WTC11 (cell line): ENCODE measurements at regions of chr6 and their contacts with region 1.

Region 1: DNA sequence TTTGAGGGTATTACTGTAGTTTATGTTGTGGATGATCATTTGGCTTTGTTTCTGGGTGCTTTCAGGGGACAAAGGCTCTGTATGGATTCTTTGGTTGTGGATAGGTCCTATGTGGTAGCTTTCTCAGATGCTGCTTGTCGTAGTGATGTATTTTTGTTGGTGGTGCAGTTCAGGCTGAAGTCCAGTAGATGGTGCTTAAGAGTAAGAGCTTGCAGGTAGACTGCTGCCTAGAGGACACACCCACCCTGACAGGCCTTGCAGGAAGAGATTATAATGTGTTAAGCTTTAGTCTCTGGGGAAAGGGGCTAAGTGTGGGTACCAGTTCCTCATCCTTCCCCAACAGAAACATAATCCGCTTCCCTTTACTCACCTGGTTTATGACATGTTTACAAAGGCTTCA is 62.6 kb upstream of the ADGRB3 start:
- DNase-seq: peak; percentile 63
- ATAC-seq: peak; percentile 90
- H3K4me3 Mint-ChIP-seq: no peak overlapping the region
- H3K27ac Mint-ChIP-seq: no peak overlapping the region
- H3K4me1 Mint-ChIP-seq: peaks cover 20% of the 10 kb centered on the region
- H3K27me3 Mint-ChIP-seq: no peaks in the 10 kb centered on the region
- CTCF ChIP-seq: peak; percentile 58; the same call in 1 of the 2 replicates

Region 2: GRCh38 chr6:68559070-68559469 is 13.5 kb before region 1 on chr6:
- CTCF ChIA-PET with region 1: interaction called, 16 read pairs
- POLR2A ChIA-PET with region 1: no interaction called
- DNase-seq: no peak
- ATAC-seq: peak; percentile 69
- H3K4me3 Mint-ChIP-seq: peak overlapping the region; percentile 22; the same call in 1 of the 2 replicates
- H3K27ac Mint-ChIP-seq: peak overlapping the region; percentile 91
- H3K4me1 Mint-ChIP-seq: peaks cover 21% of the 10 kb centered on the region
- H3K27me3 Mint-ChIP-seq: no peaks in the 10 kb centered on the region
- CTCF ChIP-seq: no peak

Region 3: GRCh38 chr6:68634726-68635411 is 62.3 kb after region 1 on chr6 and contains the start of gene ADGRB3:
- CTCF ChIA-PET with region 1: interaction called, 38 read pairs
- POLR2A ChIA-PET with region 1: interaction called, 3 read pairs
- DNase-seq: peak; percentile 76
- ATAC-seq: peak; percentile 67
- H3K4me3 Mint-ChIP-seq: peak within 1 kb of the TSS; percentile 93
- H3K27ac Mint-ChIP-seq: peak within 1 kb of the TSS; percentile 80; the same call in 1 of the 2 replicates
- H3K4me1 Mint-ChIP-seq: peaks cover 36% of the 10 kb centered on the region
- H3K27me3 Mint-ChIP-seq: peaks cover 63% of the 10 kb centered on the region
- CTCF ChIP-seq: no peak
- total RNA-seq, gene ADGRB3: 1.0 to 1.9 TPM (median 1.2 TPM) in 3 replicates

Region 4: DNA sequence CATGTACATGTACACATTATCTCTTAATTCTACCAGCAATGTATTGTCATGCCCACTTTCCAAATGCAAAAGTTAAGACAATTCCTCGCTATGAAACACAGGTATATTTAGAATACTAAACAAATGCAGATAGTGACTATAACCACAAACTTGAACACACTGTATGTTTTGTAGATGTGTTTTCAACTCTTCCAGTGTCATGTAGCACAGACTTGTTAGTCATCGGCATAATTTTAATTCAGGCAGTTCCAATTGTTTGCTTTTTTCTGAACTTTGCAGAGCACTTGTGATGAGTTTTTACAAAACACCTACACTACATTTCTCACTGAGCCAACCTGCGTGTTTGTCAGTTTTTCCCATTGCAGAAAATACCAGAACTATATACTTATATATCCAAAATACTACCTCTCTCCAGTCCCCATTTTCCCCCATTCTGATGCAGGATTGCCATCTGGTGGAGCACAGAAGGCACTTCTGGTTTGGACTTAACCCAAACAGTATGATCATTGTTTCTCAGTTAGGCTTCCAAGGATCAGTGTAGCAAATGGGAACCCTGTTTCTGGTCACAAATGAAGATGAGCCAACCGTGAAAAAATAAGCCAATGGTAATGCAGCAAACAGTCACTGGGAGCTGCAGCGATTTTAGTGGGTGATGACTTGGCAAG is 206.0 kb after region 1 on chr6:
- CTCF ChIA-PET with region 1: interaction called, 21 read pairs
- POLR2A ChIA-PET with region 1: no interaction called
- DNase-seq: peak; percentile 43
- ATAC-seq: peak; percentile 96
- H3K4me3 Mint-ChIP-seq: no peak overlapping the region
- H3K27ac Mint-ChIP-seq: no peak overlapping the region
- H3K4me1 Mint-ChIP-seq: peaks cover 4% of the 10 kb centered on the region; the same call in 1 of the 2 replicates
- H3K27me3 Mint-ChIP-seq: no peaks in the 10 kb centered on the region
- CTCF ChIP-seq: peak; percentile 49; the same call in 1 of the 2 replicates